Activated CD4-positive, alpha-beta T cell treated with anti-CD3 and anti-CD28 coated beads for 36 hours (primary cell): ENCODE measurements at regions of chr2 and their contacts with region 1.

Region 1: DNA sequence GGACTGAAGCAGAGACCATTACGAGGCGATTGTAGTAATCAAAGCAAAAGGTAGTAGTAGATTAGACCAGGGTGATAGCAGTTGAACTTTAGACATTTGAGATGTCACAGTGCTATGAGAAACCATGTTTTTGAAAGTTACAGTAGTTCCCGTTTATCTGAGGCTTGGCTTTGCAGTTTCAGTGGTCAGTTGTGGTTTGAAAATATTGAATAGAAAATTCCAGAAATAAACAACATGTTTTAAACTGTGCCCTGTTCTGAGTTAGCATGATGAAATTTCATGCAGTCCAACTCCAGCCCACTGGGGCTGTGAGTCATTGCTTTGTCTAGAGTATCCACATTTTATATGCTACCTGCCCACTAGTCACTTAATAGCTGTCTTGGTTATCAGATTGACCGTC is 47.5 kb downstream of the ZNF638 start:
- DNase-seq: no peak
- ATAC-seq: no peak
- H3K4me3 Mint-ChIP-seq: no peak overlapping the region
- H3K27ac Mint-ChIP-seq: peak overlapping the region; percentile 59
- H3K4me1 Mint-ChIP-seq: peaks cover 6% of the 10 kb centered on the region
- H3K27me3 Mint-ChIP-seq: no peaks in the 10 kb centered on the region

Region 2: GRCh38 chr2:71395471-71395870 is 16.4 kb after region 1 on chr2:
- CTCF ChIA-PET with region 1: interaction called, 3 read pairs
- POLR2A ChIA-PET with region 1: no interaction called
- intact Hi-C with region 1: loop called in 1 of 2 experiments (anchors 2 kb)
- DNase-seq: no peak
- ATAC-seq: no peak
- H3K4me3 Mint-ChIP-seq: no peak overlapping the region
- H3K27ac Mint-ChIP-seq: no peak overlapping the region
- H3K4me1 Mint-ChIP-seq: peaks cover 2% of the 10 kb centered on the region
- H3K27me3 Mint-ChIP-seq: no peaks in the 10 kb centered on the region

Region 3: GRCh38 chr2:71530641-71531332 is 151.7 kb after region 1 on chr2:
- CTCF ChIA-PET with region 1: no interaction called
- POLR2A ChIA-PET with region 1: no interaction called
- intact Hi-C with region 1: no loop called
- DNase-seq: peak; percentile 46
- ATAC-seq: peak; percentile 65
- H3K4me3 Mint-ChIP-seq: no peak overlapping the region
- H3K27ac Mint-ChIP-seq: no peak overlapping the region
- H3K4me1 Mint-ChIP-seq: peaks cover 2% of the 10 kb centered on the region
- H3K27me3 Mint-ChIP-seq: peaks cover 29% of the 10 kb centered on the region